ENCODE measurements at regions of chr2 and their contacts with region 1.

Region 1: GRCh38 chr2:38076606-38077430 is 867 bp upstream of the CYP1B1 start:
- DNase-seq: peak; percentile 84
- ATAC-seq: peak; percentile 44
- H3K4me3 ChIP-seq: peak overlapping the region; percentile 69
- H3K27ac ChIP-seq: peak overlapping the region; percentile 85
- H3K4me1 ChIP-seq: peaks cover 27% of the 10 kb centered on the region
- H3K27me3 ChIP-seq: peaks cover 34% of the 10 kb centered on the region
- CTCF ChIP-seq: peak; percentile 65

Region 2: DNA sequence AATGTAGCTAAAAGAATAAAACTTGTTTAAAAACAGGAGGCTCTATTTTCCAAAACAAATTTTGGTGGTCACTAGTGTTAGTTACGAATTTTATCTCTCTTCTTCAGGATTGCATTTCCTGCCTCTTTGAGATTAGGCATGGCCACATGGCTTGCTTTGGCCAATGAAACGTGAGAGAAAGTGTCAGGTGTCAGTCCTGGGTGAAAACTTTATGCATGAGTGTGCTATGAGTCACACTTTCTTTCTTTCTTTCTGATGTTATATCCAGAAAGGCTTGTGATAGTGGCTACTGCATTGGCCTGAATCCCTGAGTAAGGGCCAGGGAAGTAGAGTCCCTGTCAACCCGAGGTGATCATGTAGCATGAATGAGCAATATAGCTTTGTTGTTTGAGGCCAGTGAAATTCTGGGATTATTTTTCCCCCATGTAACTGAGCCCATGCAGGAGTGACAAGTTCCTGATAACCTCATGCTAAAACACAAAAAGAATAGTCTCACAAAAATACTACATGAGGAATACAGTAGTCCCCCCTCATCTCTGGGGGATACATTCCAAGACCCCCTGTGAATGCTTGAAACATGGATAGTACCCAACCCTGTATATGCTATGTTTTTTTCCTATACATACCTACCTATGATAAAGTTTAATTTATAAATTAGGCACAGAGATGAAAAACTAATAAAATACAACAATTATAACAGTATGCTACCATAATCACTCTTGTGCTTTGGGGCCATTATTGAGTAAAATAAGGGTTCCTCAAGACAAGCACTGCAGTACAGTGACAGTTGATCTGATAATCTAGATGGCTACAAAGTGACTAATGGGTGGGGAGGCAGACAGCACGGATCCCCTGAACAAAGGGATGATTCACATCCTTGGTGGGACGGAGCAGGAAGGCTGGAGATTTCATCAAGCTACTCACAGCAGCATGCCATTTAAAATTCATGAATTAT is 514.9 kb before region 1 on chr2:
- CTCF ChIA-PET with region 1: no interaction called
- POLR2A ChIA-PET with region 1: no interaction called
- intact Hi-C with region 1: no loop called
- DNase-seq: peak; percentile 96
- ATAC-seq: peak; percentile 95
- H3K4me3 ChIP-seq: peak overlapping the region; percentile 33; the same call in 1 of the 2 replicates
- H3K27ac ChIP-seq: peak overlapping the region; percentile 96
- H3K4me1 ChIP-seq: peaks cover 27% of the 10 kb centered on the region
- H3K27me3 ChIP-seq: no peaks in the 10 kb centered on the region
- CTCF ChIP-seq: no peak

Region 3: DNA sequence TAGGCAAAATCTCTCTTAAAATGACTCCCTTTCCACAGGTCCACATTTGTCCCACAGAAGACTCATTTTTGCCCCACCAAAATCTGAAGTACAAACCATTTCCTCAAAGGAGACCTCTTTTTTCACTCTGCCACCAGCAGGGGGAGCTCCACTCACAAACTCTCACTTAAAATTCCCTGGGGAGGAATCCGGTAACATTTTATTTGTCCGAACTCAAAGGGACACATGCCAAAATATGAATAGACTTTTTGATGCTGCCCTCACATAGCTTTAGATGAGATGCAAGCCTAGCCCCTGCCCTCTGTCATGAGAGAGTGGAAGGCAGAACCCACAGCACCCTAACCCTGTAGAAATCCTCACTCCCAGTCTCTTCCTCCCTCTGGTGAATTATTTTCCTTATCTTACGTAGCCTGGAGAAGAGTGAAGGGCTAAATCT is 94.7 kb before region 1 on chr2:
- CTCF ChIA-PET with region 1: interaction called, 3 read pairs
- POLR2A ChIA-PET with region 1: no interaction called
- intact Hi-C with region 1: loop called (anchors 5 kb)
- DNase-seq: peak; percentile 79
- ATAC-seq: peak; percentile 42; the same call in 1 of the 2 replicates
- H3K4me3 ChIP-seq: no peak overlapping the region
- H3K27ac ChIP-seq: no peak overlapping the region
- H3K4me1 ChIP-seq: 0 out of 2 replicates have a peak, but pooled peaks cover 6% of the 10 kb centered on the region
- H3K27me3 ChIP-seq: no peaks in the 10 kb centered on the region
- CTCF ChIP-seq: peak; percentile 94

Region 4: DNA sequence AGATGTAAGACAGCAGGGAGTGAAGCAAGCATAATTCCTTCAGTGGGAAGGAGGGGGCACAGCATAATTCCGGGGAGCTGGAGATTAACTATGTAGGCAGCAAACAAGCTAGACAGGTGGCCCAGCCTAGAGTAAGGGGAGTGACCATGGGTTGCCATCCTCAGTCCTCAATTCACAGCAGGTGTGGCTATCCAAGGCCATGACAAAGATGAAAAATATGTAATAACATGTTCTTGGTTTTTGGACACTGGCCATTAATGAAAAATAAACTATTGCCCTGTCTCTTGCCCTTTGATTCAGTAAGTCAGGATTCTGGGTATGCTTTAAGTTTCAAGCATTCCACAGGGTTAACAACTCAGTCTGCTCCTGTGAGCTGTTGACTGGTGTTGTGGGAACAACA is 65.8 kb before region 1 on chr2:
- CTCF ChIA-PET with region 1: no interaction called
- POLR2A ChIA-PET with region 1: no interaction called
- intact Hi-C with region 1: loop called (anchors 1 kb)
- DNase-seq: peak; percentile 91
- ATAC-seq: peak; percentile 54
- H3K4me3 ChIP-seq: no peak overlapping the region
- H3K27ac ChIP-seq: peak overlapping the region; percentile 64
- H3K4me1 ChIP-seq: peaks cover 54% of the 10 kb centered on the region
- H3K27me3 ChIP-seq: no peaks in the 10 kb centered on the region
- CTCF ChIP-seq: no peak

Region 5: GRCh38 chr2:38092196-38092922 is 15.5 kb after region 1 on chr2:
- CTCF ChIA-PET with region 1: interaction called, 6 read pairs
- POLR2A ChIA-PET with region 1: interaction called, 19 read pairs
- intact Hi-C with region 1: no loop called
- DNase-seq: no peak
- ATAC-seq: no peak
- H3K4me3 ChIP-seq: no peak overlapping the region
- H3K27ac ChIP-seq: peak overlapping the region; percentile 19; the same call in 1 of the 2 replicates
- H3K4me1 ChIP-seq: peaks cover 24% of the 10 kb centered on the region
- H3K27me3 ChIP-seq: no peaks in the 10 kb centered on the region; the same call in 1 of the 2 replicates
- CTCF ChIP-seq: no peak